ENCODE measurements at regions of chr19 and their contacts with region 1.

Region 1: DNA sequence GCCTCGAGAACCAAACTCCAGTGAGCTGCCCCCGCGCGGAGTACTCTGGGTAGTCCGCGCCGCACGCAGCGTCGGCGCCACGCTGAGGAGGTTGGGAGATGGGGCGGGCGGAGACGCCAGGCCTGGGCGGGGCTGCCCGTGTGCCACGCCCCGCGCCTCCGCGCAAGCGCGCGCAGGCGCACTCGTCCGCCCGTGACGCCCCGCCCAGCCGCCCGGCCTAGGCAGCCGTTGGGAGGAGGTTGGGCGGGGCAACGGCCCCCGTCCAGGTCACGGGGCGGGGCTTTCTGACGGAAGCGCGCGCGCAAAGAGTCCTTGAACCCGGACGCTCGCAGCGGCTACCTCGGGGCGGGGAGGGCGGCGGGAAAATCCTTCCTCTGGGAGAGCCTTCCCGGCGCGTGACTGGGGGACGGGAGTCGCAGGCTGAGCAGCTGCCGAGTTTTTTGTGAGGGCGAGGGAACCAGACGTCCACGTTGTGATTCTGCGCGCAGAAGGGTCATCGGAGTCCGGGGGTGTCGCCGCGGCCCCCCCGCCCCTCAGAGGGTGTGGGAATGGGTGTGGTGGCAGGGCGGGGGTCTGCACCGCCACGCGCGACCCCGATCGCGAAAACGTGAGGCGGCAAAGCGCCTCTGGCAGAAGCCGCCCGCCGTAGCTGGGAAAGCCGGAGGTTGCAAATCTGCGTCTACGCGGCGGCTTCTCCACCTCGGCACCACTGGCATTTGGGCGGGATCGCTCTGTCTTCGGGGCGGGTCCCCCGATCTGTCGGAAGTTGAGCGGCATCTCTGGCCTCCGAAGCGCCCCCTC is at the start of gene MED26:
- DNase-seq: peak; percentile 91 to 97 (median 94)
- ATAC-seq: peak; percentile 97
- H3K4me3 ChIP-seq: peak within 1 kb of the TSS; percentile 92
- H3K4me3 Mint-ChIP-seq: peak within 1 kb of the TSS; percentile 92 to 98 (median 97)
- H3K27ac ChIP-seq: peak within 1 kb of the TSS; percentile 97
- H3K27ac Mint-ChIP-seq: peak within 1 kb of the TSS; percentile 88 to 99 (median 98)
- H3K4me1 ChIP-seq: peaks cover 15% of the 10 kb centered on the region in 2 donors
- H3K4me1 Mint-ChIP-seq: peaks cover 34 to 49% (median 44%) of the 10 kb centered on the region in 7 donors
- H3K27me3 ChIP-seq: no peaks in the 10 kb centered on the region
- H3K27me3 Mint-ChIP-seq: peaks cover 0 to 1% (median 0%) of the 10 kb centered on the region in 5 donors
- total RNA-seq, gene MED26: 14.2 to 34.3 (median 17.4) TPM

Region 2: GRCh38 chr19:16470911-16471811 is 157.2 kb before region 1 on chr19:
- CTCF ChIA-PET with region 1: no interaction called
- POLR2A ChIA-PET with region 1: no interaction called
- intact Hi-C with region 1: loop called (anchors 1 kb)
- DNase-seq: peak in 5 of 9 donors; percentile 14 to 40 (median 18)
- ATAC-seq: peak; percentile 2
- H3K4me3 ChIP-seq: peak overlapping the region; percentile 96
- H3K4me3 Mint-ChIP-seq: peak overlapping the region; percentile 84 to 93 (median 88)
- H3K27ac ChIP-seq: peak overlapping the region; percentile 96
- H3K27ac Mint-ChIP-seq: peak overlapping the region; percentile 18 to 87 (median 79)
- H3K4me1 ChIP-seq: peaks cover 5 to 15% of the 10 kb centered on the region in 2 donors
- H3K4me1 Mint-ChIP-seq: peaks cover 30 to 47% (median 41%) of the 10 kb centered on the region in 7 donors
- H3K27me3 ChIP-seq: no peaks in the 10 kb centered on the region
- H3K27me3 Mint-ChIP-seq: peaks cover 0 to 2% (median 0%) of the 10 kb centered on the region in 5 donors

Region 3: DNA sequence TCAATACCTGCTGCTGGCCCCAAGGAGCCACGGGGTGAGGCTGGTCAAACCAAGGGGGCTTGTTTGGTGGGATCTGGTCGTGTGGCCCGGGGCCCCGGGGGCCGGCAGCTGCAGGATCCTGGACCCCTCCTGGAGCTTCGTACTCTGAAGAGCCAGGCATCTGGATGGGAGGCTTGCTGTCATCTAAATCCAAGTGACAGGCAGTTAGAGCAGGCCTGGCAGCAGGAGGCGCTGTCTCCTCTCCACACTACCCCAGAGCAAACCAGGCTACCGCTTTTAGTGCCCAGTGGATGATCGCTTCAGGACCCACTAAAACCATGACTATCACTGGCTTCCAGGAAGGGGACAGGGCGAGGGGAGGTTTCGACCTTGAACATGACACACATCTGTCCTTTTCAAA is 100.3 kb before region 1 on chr19:
- CTCF ChIA-PET with region 1: no interaction called
- POLR2A ChIA-PET with region 1: interaction called, 4 read pairs
- intact Hi-C with region 1: loop called (anchors 2 to 5 kb)
- DNase-seq: peak in 8 of 9 donors; percentile 19 to 54 (median 37)
- ATAC-seq: peak; percentile 77
- H3K4me3 ChIP-seq: no peak overlapping the region
- H3K4me3 Mint-ChIP-seq: no peak overlapping the region
- H3K27ac ChIP-seq: no peak overlapping the region
- H3K27ac Mint-ChIP-seq: peak overlapping the region in 4 of 9 donors; percentile 20 to 42 (median 38)
- H3K4me1 ChIP-seq: no peaks in the 10 kb centered on the region
- H3K4me1 Mint-ChIP-seq: no peaks in the 10 kb centered on the region
- H3K27me3 ChIP-seq: no peaks in the 10 kb centered on the region
- H3K27me3 Mint-ChIP-seq: no peaks in the 10 kb centered on the region

Region 4: DNA sequence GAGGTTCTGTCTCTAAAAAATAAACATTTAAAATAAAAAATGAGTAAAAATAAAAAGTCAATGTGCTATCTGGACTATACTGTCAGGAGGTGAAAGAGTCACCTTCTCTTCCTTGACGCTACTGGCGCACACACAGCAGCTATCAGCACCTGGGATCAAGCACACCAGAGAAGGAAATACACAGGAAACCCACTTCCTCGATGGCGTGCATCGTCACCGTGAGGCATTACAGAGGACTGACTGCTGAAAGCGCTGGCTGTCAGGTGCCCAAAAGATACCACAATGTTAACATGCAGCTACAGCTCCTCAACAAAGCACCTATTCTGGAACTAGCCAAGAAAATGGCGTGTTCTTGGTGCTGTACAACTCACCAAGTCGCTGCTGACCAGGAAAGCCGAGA is 62.2 kb before region 1 on chr19:
- CTCF ChIA-PET with region 1: interaction called, 4 read pairs
- POLR2A ChIA-PET with region 1: interaction called, 11 read pairs
- intact Hi-C with region 1: loop called in 1 of 2 experiments (anchors 1 kb)
- DNase-seq: peak in 8 of 9 donors; percentile 46 to 95 (median 92)
- ATAC-seq: peak; percentile 100
- H3K4me3 ChIP-seq: peak overlapping the region; percentile 17
- H3K4me3 Mint-ChIP-seq: peak overlapping the region; percentile 76 to 97 (median 82)
- H3K27ac ChIP-seq: peak overlapping the region; percentile 81
- H3K27ac Mint-ChIP-seq: peak overlapping the region; percentile 92 to 100 (median 98)
- H3K4me1 ChIP-seq: peaks cover 22 to 24% of the 10 kb centered on the region in 2 donors
- H3K4me1 Mint-ChIP-seq: peaks cover 14 to 63% (median 30%) of the 10 kb centered on the region in 7 donors
- H3K27me3 ChIP-seq: no peaks in the 10 kb centered on the region
- H3K27me3 Mint-ChIP-seq: no peaks in the 10 kb centered on the region

Region 5: GRCh38 chr19:16584248-16585141 is 43.9 kb before region 1 on chr19:
- CTCF ChIA-PET with region 1: no interaction called
- POLR2A ChIA-PET with region 1: interaction called, 18 read pairs
- intact Hi-C with region 1: loop called (anchors 1 kb)
- DNase-seq: peak; percentile 68 to 93 (median 86)
- ATAC-seq: peak; percentile 89
- H3K4me3 ChIP-seq: peak overlapping the region; percentile 26
- H3K4me3 Mint-ChIP-seq: peak overlapping the region; percentile 70 to 90 (median 78)
- H3K27ac ChIP-seq: peak overlapping the region; percentile 62
- H3K27ac Mint-ChIP-seq: peak overlapping the region; percentile 82 to 95 (median 90)
- H3K4me1 ChIP-seq: peaks cover 65% of the 10 kb centered on the region in 2 donors
- H3K4me1 Mint-ChIP-seq: peaks cover 49 to 90% (median 77%) of the 10 kb centered on the region in 7 donors
- H3K27me3 ChIP-seq: no peaks in the 10 kb centered on the region
- H3K27me3 Mint-ChIP-seq: no peaks in the 10 kb centered on the region

Region 6: DNA sequence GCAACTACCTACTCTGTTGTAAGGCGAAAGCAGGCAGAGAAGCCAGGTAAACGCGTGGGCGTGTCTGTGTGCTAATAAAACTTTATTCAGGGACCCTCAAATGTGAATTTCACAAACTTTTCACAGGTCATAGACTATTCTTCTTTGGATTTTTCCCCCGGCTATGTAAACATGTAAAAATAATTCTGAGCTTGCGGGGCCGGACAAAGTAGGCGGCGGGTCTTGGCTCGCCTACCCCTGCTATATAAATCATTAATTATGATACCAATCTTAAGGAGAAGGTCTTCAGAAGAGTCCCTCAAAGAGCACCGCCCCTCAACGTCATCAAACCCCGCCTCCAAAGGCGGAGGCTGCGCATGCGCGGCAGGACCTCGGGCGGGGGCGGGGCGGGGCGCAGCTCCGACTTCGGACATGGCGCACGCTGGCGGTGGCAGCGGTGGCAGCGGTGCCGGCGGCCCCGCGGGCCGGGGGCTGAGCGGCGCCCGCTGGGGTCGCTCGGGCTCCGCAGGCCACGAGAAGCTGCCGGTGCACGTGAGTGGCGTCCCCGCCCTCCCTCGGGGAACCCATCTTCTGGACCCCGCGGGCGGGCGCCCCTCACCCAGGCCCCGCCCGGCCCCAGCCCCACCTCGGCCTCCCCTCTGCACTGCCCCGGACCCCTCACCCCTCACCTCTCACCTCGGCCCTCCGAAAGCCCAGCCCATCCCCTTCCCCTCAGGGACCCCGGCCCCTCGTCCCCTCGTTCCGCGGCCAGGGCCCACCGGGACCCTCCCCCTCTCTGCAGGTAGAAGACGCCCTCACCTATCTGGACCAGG is 200.8 kb after region 1 on chr19 and contains the start of gene SIN3B:
- CTCF ChIA-PET with region 1: no interaction called
- POLR2A ChIA-PET with region 1: no interaction called
- intact Hi-C with region 1: loop called in 1 of 2 experiments (anchors 1 kb)
- DNase-seq: peak; percentile 84 to 94 (median 89)
- ATAC-seq: peak; percentile 97
- H3K4me3 ChIP-seq: peak within 1 kb of the TSS; percentile 67
- H3K4me3 Mint-ChIP-seq: peak within 1 kb of the TSS; percentile 77 to 90 (median 86)
- H3K27ac ChIP-seq: peak within 1 kb of the TSS; percentile 93
- H3K27ac Mint-ChIP-seq: peak within 1 kb of the TSS; percentile 56 to 95 (median 89)
- H3K4me1 ChIP-seq: peaks cover 8% of the 10 kb centered on the region in 2 donors
- H3K4me1 Mint-ChIP-seq: peaks cover 16 to 54% (median 42%) of the 10 kb centered on the region in 7 donors
- H3K27me3 ChIP-seq: no peaks in the 10 kb centered on the region
- H3K27me3 Mint-ChIP-seq: peaks cover 11 to 27% (median 21%) of the 10 kb centered on the region in 5 donors
- total RNA-seq, gene SIN3B: 42.7 to 105 (median 102) TPM

Measured in naive thymus-derived CD4-positive, alpha-beta T cell (primary cell).